Endothelial cell of umbilical vein (primary cell): ENCODE measurements at regions of chr14 and their contacts with region 1.

Region 1: GRCh38 chr14:30521899-30522736 is 36.8 kb upstream of the G2E3 start:
- DNase-seq: peak; percentile 54
- H3K4me3 ChIP-seq: no peak overlapping the region
- H3K27ac ChIP-seq: no peak overlapping the region
- H3K4me1 ChIP-seq: no peaks in the 10 kb centered on the region
- H3K27me3 ChIP-seq: peaks cover 4% of the 10 kb centered on the region in 2 experiments
- CTCF ChIP-seq: peak; percentile 34 to 56
- POLR2A ChIP-seq: no peak

Region 2: DNA sequence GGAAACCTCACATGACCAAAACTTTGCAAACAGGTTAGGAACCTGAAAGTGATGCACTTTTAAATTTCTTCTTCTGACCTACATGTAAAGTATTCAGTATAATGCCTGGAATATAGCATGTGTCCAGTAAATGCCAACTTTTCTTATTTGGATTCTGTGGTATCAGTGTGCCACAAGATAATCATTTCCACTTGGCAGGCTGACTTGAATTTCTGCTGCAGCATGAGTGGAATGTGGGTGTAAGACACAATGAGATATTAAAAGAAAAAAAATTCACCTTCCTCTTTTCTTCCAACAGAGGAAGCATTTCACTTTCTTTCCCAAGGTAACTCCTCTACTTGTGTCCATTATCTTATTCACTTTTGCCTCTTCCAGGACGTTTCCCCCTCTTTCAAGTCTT is 452.6 kb before region 1 on chr14:
- CTCF ChIA-PET with region 1: no interaction called
- POLR2A ChIA-PET with region 1: no interaction called
- dilution Hi-C with region 1: no loop called
- intact Hi-C with region 1: no loop called
- DNase-seq: no peak
- H3K4me3 ChIP-seq: no peak overlapping the region
- H3K27ac ChIP-seq: no peak overlapping the region
- H3K4me1 ChIP-seq: no peaks in the 10 kb centered on the region
- H3K27me3 ChIP-seq: no peaks in the 10 kb centered on the region
- CTCF ChIP-seq: no peak
- POLR2A ChIP-seq: no peak

Region 3: DNA sequence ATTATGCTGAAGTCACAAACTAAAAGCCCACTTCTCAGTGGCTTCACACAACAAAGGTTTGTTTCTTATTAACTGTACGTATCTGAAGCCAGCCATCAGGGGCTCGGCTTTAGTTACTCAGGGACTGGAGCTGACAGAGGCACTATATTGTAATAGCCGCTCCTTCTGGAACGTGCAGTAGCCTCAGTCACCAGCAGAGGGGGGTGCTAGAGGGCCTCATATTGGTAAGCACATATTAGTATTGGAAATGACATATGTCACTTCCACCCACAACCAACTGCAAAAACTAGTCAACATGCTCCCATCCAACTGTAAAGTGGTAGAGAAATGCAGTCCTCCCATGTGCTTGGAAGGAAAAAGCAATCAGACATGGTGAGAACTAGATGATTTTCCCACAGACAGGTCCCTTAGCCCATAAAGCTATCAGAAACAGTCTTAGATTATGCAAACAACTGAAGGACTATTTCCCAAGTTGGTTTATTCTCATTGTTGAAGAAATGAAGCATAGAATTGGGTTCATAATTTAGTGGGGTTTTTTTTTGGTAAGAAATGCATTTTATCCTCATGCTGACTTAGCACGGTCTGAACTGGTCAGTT is 146.7 kb before region 1 on chr14:
- CTCF ChIA-PET with region 1: interaction called, 30 read pairs
- POLR2A ChIA-PET with region 1: no interaction called
- dilution Hi-C with region 1: no loop called
- intact Hi-C with region 1: loop called (anchors 1 kb)
- DNase-seq: peak; percentile 68
- H3K4me3 ChIP-seq: no peak overlapping the region
- H3K27ac ChIP-seq: no peak overlapping the region
- H3K4me1 ChIP-seq: no peaks in the 10 kb centered on the region
- H3K27me3 ChIP-seq: no peaks in the 10 kb centered on the region
- CTCF ChIP-seq: peak; percentile 80 to 86
- POLR2A ChIP-seq: no peak

Region 4: GRCh38 chr14:30402846-30403245 is 119.3 kb before region 1 on chr14:
- CTCF ChIA-PET with region 1: no interaction called
- POLR2A ChIA-PET with region 1: no interaction called
- dilution Hi-C with region 1: no loop called
- intact Hi-C with region 1: no loop called
- DNase-seq: no peak
- H3K4me3 ChIP-seq: no peak overlapping the region
- H3K27ac ChIP-seq: no peak overlapping the region
- H3K4me1 ChIP-seq: no peaks in the 10 kb centered on the region
- H3K27me3 ChIP-seq: no peaks in the 10 kb centered on the region
- CTCF ChIP-seq: no peak
- POLR2A ChIP-seq: no peak

Region 5: DNA sequence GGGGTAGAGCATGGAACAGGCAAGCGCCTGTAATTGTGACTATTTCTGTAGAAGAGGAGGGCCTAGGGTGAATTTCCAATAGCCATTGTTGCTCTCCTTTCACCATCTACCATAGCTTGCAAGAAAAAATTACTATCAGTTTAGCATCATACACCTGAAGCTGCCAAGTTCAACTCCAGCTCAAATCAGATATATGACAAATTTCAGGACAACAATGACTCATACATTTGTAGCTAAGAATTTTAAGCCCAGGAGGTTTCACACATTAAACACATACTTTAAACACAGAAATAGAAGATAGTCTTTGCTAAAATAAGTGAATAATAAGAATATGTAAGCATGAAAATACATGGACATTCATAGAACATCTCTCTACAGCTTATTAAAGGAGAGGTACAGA is 19.2 kb after region 1 on chr14:
- CTCF ChIA-PET with region 1: interaction called, 11 read pairs
- POLR2A ChIA-PET with region 1: no interaction called
- dilution Hi-C with region 1: no loop called
- intact Hi-C with region 1: no loop called
- DNase-seq: no peak
- H3K4me3 ChIP-seq: no peak overlapping the region
- H3K27ac ChIP-seq: no peak overlapping the region
- H3K4me1 ChIP-seq: no peaks in the 10 kb centered on the region
- H3K27me3 ChIP-seq: peaks cover 3 to 27% of the 10 kb centered on the region in 2 experiments
- CTCF ChIP-seq: no peak
- POLR2A ChIP-seq: no peak